ENCODE measurements at regions of chr14 and their contacts with region 1.

Region 1: DNA sequence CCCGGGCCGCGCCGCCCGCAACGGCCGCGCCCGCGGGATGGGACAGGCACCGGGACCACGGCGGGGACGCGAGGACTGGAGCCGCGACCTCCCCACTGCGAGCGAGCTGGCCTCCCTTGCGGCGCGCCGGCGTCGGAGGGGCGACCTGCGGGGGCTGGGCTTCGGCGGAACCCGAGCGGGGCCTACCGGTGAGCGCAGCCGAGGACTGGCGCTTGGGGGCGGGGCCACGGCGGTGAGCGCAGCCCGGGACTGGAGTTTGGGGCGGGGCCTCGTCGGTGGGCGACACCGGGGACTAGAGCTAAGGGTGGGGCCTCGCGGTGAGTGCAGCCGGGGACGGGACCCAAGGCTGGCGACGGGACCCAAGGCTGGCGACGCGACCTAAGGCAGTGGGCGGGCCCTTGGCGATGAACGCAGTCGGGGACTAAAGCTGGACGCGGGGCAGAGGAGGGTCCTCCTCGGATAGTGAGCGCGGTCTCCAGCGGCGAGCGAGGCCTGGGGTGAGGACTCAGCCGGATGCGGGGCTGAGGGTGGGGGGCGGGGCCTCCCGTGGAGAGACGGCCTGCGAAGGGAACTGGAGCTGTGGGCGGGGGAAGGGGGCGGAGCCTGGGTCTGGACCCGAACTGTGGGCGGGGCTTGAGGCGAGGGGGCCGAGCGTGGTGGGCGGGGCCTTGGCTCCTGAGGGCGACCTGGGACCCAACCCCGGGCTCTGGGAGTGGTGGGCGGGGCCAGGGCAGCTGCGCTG is at the start of gene BRF1:
- DNase-seq: peak; percentile 100
- ATAC-seq: peak; percentile 87
- H3K4me3 Mint-ChIP-seq: peak within 1 kb of the TSS; percentile 94
- H3K27ac Mint-ChIP-seq: peak within 1 kb of the TSS; percentile 95
- H3K4me1 Mint-ChIP-seq: peaks cover 32% of the 10 kb centered on the region
- H3K27me3 Mint-ChIP-seq: peaks cover 2% of the 10 kb centered on the region
- total RNA-seq, gene BRF1: 49.5 to 50.4 TPM

Region 2: DNA sequence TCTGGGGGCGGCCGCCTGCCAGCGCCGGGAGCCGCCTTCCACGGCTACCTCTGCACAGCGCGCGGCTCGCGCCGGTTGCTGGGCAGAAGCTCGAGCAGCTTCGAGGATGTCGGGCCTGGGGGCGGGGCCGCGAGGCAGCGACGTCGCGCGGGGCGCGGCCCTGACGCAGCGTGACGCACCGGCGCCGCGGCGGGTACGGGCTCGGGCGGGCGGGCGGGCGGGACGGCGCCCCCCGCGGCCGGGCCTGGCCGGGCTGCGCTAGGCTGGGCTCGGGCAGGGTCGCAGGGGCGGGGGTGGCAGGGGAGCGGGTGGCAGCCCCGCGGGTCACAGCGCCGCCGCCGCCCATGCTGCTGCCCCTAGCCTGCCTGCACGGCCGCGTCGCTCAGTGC is 52.6 kb before region 1 on chr14 and contains the start of gene BTBD6:
- POLR2A ChIA-PET with region 1: interaction called, 16 read pairs
- DNase-seq: peak; percentile 93
- ATAC-seq: peak; percentile 95
- H3K4me3 Mint-ChIP-seq: peak within 1 kb of the TSS; percentile 82
- H3K27ac Mint-ChIP-seq: peak within 1 kb of the TSS; percentile 82
- H3K4me1 Mint-ChIP-seq: peaks cover 32% of the 10 kb centered on the region
- H3K27me3 Mint-ChIP-seq: no peaks in the 10 kb centered on the region
- total RNA-seq, gene BTBD6: 49.6 to 51.3 TPM

Region 3: DNA sequence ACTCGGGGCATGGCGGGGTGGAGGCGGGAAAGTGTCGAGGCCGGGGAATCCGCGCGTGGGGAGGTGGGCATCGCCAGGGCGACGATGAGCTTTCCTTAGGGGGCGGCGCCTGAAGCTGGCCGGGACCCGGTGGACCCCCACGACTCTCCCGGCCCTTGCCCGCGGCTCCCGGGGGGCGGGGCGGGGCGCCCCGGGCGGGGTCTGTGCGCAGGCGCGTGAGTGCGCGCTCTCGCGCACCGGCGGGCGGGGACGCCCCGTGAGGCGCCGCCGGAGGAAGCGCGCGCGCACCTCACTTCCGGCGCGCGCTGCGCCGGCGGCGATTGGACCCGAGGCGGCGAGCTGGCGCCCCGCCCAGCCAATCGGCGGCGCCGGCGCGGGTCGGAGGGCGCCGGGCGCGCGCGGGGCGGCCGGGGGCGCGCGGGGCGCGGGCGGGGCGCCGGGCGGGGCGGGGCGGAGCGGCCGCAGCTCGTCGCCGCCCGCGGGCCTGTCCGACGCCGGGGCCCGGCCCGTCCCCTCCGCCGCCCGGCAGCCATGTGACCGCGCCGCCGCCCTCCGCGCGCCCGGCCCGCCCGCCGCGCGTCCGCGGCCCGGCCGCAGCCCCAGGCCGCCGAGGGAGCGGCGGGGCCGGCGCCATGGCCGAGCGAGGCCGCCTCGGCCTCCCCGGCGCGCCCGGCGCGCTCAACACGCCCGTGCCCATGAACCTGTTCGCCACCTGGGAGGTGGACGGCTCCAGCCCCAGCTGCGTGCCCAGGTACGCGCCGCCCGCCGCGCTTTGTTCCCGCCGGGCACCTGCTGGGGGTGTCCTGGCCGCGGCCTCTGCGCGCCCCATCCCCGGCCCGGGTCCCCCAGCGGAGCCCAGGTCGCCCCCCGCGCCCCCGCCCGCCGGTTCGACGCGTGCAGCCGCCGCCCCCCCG is 13.6 kb after region 1 on chr14 and contains the start of gene PACS2:
- POLR2A ChIA-PET with region 1: interaction called, 61 read pairs
- DNase-seq: peak; percentile 92
- ATAC-seq: peak; percentile 79
- H3K4me3 Mint-ChIP-seq: peak within 1 kb of the TSS; percentile 86
- H3K27ac Mint-ChIP-seq: peak within 1 kb of the TSS; percentile 81
- H3K4me1 Mint-ChIP-seq: peaks cover 22% of the 10 kb centered on the region
- H3K27me3 Mint-ChIP-seq: peaks cover 3% of the 10 kb centered on the region
- total RNA-seq, gene PACS2: 51.6 to 54.7 TPM